ENCODE measurements at regions of chr2 and their contacts with region 1.

Region 1: DNA sequence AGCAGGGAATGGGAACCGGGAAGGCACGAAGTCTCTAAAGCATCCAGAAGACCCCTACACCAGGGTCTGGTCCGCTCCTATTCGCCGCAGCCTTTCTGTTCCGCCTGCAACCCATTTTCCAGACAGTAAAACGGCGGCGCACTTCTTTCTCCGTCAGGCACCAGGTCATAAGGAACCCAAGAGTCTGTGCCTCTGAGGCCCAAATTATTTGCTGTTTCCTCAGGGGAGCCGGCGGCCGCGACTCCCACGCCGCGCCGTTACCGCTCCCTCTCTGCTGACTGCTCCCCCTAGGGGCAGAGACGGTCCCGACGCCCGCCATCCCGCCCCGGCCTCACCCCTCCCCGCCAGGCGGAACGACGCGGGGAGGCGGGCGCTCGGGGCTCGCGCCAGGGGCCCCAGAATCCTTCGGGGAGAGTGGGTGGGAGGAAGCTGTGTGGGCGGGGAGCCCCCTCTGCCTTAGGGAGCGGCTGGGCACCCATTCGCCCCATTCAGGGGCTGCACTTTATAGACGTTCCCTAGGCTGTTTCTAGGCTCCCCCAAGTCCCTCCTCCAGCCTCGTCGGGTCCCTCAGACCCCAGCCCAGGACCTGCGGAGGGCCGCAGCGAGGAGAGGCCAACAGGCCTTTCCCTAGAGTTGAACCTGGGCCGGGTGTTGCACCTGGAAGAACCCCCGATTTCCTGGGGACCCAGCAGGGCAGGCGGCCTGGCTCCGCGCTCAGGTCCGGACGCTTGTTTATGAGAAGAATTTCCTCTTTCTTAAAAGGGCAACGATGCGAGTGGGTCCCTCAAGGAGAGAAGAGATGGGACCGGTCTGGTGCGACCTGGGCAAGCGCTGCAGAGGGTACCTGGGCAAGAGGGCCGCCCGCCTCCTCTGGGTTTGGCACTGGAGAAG is 3.6 kb upstream of the CTDSP1 start:
- DNase-seq: peak; percentile 97 to 99 (median 98)
- ATAC-seq: peak; percentile 71
- H3K4me3 ChIP-seq: peak overlapping the region; percentile 98
- H3K27ac ChIP-seq: peak overlapping the region; percentile 99
- H3K4me1 ChIP-seq: peaks cover 14 to 67% of the 10 kb centered on the region in 2 donors
- H3K27me3 ChIP-seq: no peaks in the 10 kb centered on the region
- CTCF ChIP-seq: peak; percentile 80 to 96

Region 2: DNA sequence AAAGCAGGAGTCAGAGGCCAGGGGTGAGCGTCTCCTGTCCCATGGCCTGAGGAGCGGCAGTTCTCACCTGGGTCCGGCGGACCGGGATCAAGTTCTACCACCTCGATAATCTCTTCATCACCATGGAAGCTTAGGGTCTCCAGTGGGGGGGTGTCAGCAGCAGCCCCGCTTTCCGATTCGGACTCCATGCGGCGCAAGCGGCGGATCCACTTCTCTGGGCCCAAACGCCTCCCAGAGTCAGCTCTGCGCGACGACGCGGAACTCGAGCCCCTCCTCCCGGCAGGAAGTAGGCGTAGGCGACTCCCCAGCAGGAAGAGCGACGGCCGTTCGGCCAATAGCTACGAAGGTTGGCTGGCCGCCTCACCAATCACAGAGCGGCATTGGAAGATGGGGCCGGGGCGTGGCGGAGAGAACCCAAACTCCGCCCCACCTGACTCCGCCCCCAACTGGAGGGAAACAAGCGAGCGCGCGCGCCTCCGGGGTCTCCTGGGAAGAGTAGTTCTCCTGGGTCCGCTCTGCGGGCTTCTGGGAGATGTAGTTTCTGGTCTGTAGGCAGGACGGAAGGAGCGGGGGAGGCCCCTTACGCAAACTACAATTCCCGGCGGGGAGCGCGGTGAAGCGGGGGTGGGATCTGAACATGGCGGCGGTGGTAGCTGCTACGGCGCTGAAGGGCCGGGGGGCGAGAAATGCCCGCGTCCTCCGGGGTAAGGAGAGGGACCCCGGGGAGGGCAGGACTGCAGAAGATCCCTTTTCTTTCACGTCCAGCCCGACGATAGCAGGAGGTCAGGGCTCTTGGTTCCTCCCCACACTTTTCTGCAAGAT is 125.9 kb before region 1 on chr2 and contains the starts of genes AAMP and PNKD:
- intact Hi-C with region 1: loop called in 1 of 2 experiments (anchors 10 kb)
- DNase-seq: peak; percentile 99 to 100 (median 100)
- ATAC-seq: peak; percentile 92
- H3K4me3 ChIP-seq: peak within 1 kb of the TSS; percentile 81 to 84
- H3K27ac ChIP-seq: peak within 1 kb of the TSS; percentile 53 to 78
- H3K4me1 ChIP-seq: peaks cover 34 to 55% of the 10 kb centered on the region in 2 donors
- H3K27me3 ChIP-seq: no peaks in the 10 kb centered on the region
- CTCF ChIP-seq: peak in 1 of 2 donors; percentile 17
- polyA plus RNA-seq, gene AAMP: 106 to 120 (median 115) TPM
- polyA plus RNA-seq, gene PNKD: 58.2 to 66.2 (median 60.0) TPM

Region 3: DNA sequence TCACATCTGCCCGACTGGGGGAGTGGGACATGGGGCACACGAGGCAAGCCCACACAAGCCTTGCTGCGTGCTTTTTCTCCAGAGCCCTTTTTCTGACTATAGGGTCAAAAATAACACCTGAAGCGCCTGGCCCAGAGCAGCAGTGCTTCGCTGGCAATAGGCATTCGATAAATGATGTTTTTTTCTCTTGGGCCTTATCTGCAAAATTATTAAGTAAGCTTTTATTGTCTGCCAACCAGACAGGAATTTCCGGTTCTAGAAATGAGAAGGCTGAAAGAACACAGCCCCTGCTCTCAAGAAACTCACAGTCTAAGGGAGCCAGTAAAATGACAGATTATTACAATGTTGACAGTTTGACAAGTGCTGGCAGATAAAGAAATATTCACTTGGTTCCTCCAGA is 101.0 kb before region 1 on chr2:
- intact Hi-C with region 1: loop called in 1 of 2 experiments (anchors 5 kb)
- DNase-seq: peak in 1 of 4 donors; percentile 77
- ATAC-seq: peak; percentile 8
- H3K4me3 ChIP-seq: no peak overlapping the region
- H3K27ac ChIP-seq: peak overlapping the region; percentile 83 to 98
- H3K4me1 ChIP-seq: peaks cover 22 to 49% of the 10 kb centered on the region in 2 donors
- H3K27me3 ChIP-seq: no peaks in the 10 kb centered on the region
- CTCF ChIP-seq: no peak